Heart left ventricle (tissue), 16 donors: ENCODE measurements at regions of chr15 and their contacts with region 1.

Region 1: DNA sequence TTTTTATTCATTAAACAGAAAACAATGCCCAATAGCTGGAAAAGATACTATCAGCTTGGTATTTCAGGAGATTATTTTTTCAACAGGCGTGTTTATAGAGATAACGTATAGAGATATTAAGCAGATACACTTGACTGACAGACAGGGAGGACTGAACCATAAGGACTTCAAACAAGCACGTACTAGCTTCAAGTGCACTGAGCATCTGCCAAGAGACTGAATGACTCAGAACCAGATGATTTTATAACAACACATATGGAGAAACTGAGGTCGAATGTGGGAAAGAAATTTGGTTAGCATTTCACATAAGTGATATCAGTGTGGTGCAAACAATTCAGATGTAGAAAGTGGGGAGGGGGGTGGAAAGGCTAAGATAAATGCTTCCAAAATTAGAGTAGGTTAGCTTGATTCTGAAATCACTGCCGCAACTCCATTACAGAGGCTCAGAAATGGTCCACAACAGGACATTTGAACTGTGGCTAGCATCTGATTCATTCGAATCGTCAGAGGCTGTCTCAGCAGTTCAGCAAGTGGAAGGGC is 103.5 kb downstream of the SEMA6D start:
- DNase-seq: peak in 1 of 5 donors; percentile 33
- ATAC-seq: peak in 3 of 4 donors; percentile 76 to 88 (median 86)
- H3K4me3 ChIP-seq: no peak overlapping the region
- H3K27ac ChIP-seq: no peak overlapping the region
- H3K4me1 ChIP-seq: peaks cover 0 to 14% (median 3%) of the 10 kb centered on the region in 12 donors
- H3K27me3 ChIP-seq: no peaks in the 10 kb centered on the region
- CTCF ChIP-seq: no peak
- POLR2A ChIP-seq: no peak

Region 2: GRCh38 chr15:47885921-47886320 is 65.1 kb after region 1 on chr15:
- intact Hi-C with region 1: loop called in 1 of 10 experiments (anchors 10 kb)
- DNase-seq: no peak
- ATAC-seq: no peak
- H3K4me3 ChIP-seq: no peak overlapping the region
- H3K27ac ChIP-seq: no peak overlapping the region
- H3K4me1 ChIP-seq: no peaks in the 10 kb centered on the region
- H3K27me3 ChIP-seq: no peaks in the 10 kb centered on the region
- CTCF ChIP-seq: no peak
- POLR2A ChIP-seq: no peak